Heart right ventricle (tissue), 16 donors: ENCODE measurements at regions of chr10 and their contacts with region 1.

Region 1: DNA sequence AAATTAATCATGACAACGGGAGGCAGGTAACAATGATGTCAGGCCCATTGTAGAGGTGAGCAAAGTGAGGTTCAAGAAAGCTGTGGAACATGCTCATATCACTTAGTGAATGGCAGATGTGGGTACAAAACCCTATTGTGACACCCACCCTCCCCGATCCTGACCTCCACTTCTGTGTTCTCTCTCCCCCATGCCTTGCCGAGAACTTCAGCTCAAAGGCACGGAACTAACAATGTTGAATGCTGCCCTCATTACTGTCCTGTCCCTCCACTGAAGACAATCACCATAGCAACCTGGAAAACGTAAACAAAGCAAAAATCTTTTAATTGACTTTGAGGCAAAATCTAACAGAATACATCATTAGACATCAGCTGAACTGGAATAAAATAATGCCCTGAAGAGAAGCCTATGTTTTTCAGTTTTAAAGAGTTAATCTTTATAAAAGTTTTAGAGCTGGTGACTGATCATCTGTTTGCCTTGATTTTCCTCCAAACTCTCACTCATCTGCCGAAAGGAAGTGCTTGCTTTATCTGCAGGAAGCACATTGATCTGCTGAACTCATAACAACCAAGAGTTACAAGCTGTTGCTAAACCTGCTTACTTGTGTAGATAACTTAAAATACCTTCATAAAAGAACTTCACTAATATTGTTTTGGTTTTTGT is 133.6 kb downstream of the CUBN start:
- DNase-seq: peak in 1 of 2 donors; percentile 48
- ATAC-seq: peak in 7 of 8 donors; percentile 66 to 90 (median 77)
- H3K4me3 ChIP-seq: no peak overlapping the region
- H3K27ac ChIP-seq: peak overlapping the region in 9 of 10 donors; percentile 33 to 81 (median 60)
- H3K4me1 ChIP-seq: peaks cover 0 to 52% (median 19%) of the 10 kb centered on the region in 9 donors
- H3K27me3 ChIP-seq: no peaks in the 10 kb centered on the region
- CTCF ChIP-seq: no peak

Region 2: DNA sequence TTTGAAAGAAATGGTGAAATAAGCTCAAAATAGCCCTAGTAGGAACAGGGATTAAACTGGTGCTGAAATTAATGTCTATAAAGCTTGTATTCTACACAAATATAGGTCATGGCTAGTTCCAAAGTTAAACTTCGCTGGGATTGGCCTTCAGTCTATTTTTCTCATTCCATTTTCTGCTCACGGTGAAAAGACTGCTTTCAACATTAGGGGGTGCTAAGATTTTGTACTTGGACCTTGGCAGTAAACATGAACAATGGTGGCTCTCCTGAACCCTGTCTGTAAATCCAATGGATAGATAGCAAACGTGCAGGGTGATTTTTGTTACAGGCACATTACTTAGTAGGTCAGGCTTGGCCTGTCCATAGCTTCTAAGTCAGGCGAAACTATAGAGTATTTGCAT is 142.8 kb before region 1 on chr10:
- intact Hi-C with region 1: loop called in 1 of 10 experiments (anchors 10 kb)
- DNase-seq: no peak
- ATAC-seq: no peak
- H3K4me3 ChIP-seq: no peak overlapping the region
- H3K27ac ChIP-seq: no peak overlapping the region
- H3K4me1 ChIP-seq: peaks cover 0 to 14% (median 8%) of the 10 kb centered on the region in 9 donors
- H3K27me3 ChIP-seq: no peaks in the 10 kb centered on the region
- CTCF ChIP-seq: peak in 5 of 9 donors; percentile 16 to 45 (median 25)

Region 3: GRCh38 chr10:16891375-16892313 is 104.4 kb before region 1 on chr10:
- intact Hi-C with region 1: loop called in 2 of 10 experiments (anchors 5 to 10 kb)
- DNase-seq: peak; percentile 54 to 66
- ATAC-seq: peak in 7 of 8 donors; percentile 85 to 98 (median 92)
- H3K4me3 ChIP-seq: no peak overlapping the region
- H3K27ac ChIP-seq: peak overlapping the region in 2 of 10 donors; percentile 46 to 54
- H3K4me1 ChIP-seq: peaks cover 0 to 7% (median 0%) of the 10 kb centered on the region in 9 donors
- H3K27me3 ChIP-seq: no peaks in the 10 kb centered on the region
- CTCF ChIP-seq: peak; percentile 23 to 79 (median 58)

Region 4: DNA sequence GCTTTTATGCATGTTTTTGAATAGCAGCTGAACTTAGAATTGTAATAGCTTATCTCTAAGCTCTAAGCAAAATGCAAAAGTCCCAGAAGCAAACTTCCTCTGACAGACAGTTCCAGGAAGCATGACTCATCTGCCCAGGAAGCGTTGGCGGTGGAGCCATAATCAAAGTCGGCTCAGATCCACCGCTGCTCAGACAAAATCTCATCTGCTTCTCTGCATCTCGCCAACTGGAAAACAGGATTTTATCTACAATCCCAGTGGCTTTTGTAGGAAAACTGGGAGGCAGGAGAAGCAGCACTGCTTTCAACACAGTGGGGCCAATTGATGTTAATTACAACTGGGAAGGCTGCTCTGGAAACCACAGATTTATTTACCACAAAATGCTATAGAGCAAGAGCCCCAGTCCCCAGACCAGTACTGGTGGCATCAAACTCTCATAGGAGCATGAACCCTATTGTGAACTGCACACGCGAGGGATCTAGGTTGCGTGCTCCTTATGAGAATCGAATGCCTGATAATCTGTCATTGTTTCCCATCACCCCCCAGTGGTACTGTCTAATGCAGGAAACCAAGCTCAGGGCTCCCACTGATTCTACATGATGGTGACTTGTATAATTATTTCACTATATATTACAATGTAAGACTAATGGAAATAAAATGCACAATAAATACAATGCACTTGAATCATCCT is 33.7 kb after region 1 on chr10:
- intact Hi-C with region 1: loop called in 1 of 10 experiments (anchors 1 kb)
- DNase-seq: peak; percentile 49 to 86
- ATAC-seq: peak; percentile 68 to 91 (median 88)
- H3K4me3 ChIP-seq: peak overlapping the region in 5 of 10 donors; percentile 12 to 36 (median 13)
- H3K27ac ChIP-seq: peak overlapping the region; percentile 1 to 84 (median 72)
- H3K4me1 ChIP-seq: peaks cover 3 to 93% (median 39%) of the 10 kb centered on the region in 9 donors
- H3K27me3 ChIP-seq: no peaks in the 10 kb centered on the region
- CTCF ChIP-seq: no peak

Region 5: DNA sequence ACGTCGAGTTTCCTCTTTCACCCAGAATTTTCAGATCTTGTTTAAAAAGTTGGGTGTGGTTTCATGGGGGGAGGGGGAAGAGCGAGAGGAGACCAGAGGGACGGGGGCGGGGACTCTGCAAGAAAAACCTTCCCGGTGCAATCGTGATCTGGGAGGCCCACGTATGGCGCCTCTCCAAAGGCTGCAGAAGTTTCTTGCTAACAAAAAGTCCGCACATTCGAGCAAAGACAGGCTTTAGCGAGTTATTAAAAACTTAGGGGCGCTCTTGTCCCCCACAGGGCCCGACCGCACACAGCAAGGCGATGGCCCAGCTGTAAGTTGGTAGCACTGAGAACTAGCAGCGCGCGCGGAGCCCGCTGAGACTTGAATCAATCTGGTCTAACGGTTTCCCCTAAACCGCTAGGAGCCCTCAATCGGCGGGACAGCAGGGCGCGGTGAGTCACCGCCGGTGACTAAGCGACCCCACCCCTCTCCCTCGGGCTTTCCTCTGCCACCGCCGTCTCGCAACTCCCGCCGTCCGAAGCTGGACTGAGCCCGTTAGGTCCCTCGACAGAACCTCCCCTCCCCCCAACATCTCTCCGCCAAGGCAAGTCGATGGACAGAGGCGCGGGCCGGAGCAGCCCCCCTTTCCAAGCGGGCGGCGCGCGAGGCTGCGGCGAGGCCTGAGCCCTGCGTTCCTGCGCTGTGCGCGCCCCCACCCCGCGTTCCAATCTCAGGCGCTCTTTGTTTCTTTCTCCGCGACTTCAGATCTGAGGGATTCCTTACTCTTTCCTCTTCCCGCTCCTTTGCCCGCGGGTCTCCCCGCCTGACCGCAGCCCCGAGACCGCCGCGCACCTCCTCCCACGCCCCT is 232.3 kb after region 1 on chr10 and contains the start of gene VIM:
- intact Hi-C with region 1: loop called in 2 of 10 experiments (anchors 10 kb)
- DNase-seq: peak; percentile 89 to 92
- ATAC-seq: peak; percentile 68 to 88 (median 76)
- H3K4me3 ChIP-seq: peak within 1 kb of the TSS; percentile 72 to 95 (median 86)
- H3K27ac ChIP-seq: peak within 1 kb of the TSS; percentile 95 to 99 (median 98)
- H3K4me1 ChIP-seq: peaks cover 3 to 49% (median 37%) of the 10 kb centered on the region in 9 donors
- H3K27me3 ChIP-seq: peaks cover 0 to 14% (median 0%) of the 10 kb centered on the region in 7 donors
- CTCF ChIP-seq: peak in 3 of 9 donors; percentile 5 to 32 (median 21)
- total RNA-seq, gene VIM: 232 to 834 (median 332) TPM